HCT116 (cell line): ENCODE measurements at regions of chr1 and their contacts with region 1.

Region 1: GRCh38 chr1:174074757-174075156 is 52.6 kb upstream of the RC3H1 start:
- DNase-seq: no peak
- ATAC-seq: peak; percentile 66; the same call in 1 of the 2 replicates
- H3K4me3 ChIP-seq: no peak overlapping the region
- H3K27ac ChIP-seq: no peak overlapping the region
- H3K4me1 ChIP-seq: peaks cover 0 to 7% of the 10 kb centered on the region in 2 experiments; a peak in 2 of 4 replicates
- H3K27me3 ChIP-seq: no peaks in the 10 kb centered on the region
- CTCF ChIP-seq: peak; percentile 18 to 71 (median 57); a peak in 3 of 6 replicates
- POLR2A ChIP-seq: no peak
- RAD21 ChIP-seq: peak; percentile 81

Region 2: DNA sequence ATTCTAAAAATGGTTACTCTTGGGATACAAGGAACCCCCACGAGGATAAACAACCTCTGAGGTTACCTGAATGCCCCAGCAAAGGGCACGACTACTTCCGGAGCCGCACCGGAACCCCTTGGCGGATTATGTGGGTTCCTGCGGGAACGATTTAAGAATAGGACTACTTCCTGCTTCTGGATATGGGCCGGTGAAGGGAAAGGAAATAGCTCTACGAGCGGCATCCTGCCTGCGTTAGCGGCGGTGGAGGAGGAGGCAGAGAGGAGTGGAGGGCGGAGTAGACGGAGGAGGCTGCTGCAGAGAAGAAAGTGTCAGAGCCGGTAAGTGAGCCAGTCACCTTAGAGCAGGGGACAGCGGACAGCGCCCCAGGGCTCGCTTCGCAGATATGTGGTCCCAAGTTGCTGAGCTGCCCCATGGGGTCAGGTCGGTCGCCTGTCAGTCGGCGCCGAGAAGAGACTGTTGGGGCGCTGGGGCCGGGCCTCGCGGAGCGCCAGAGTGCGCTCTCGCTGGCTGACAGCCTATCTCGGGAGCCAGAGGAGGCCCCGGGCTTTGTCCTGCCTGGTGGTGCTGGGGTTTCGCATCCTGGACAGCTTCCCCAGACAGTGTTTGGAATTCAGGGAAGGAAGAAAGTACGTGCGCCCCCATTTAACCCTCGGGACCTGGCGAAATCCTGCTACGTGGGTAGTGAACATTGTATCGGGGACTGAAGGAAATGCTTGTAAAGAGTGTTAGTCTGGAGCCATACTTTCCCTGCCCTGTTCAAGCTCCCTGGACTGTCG is 359.8 kb before region 1 on chr1 and contains the start of gene KLHL20:
- CTCF ChIA-PET with region 1: no interaction called
- POLR2A ChIA-PET with region 1: no interaction called
- RAD21 ChIA-PET with region 1: no interaction called
- intact Hi-C with region 1: loop called (anchors 10 kb)
- DNase-seq: peak; percentile 89
- ATAC-seq: peak; percentile 97
- H3K4me3 ChIP-seq: peak within 1 kb of the TSS; percentile 89 to 92
- H3K27ac ChIP-seq: peak within 1 kb of the TSS; percentile 58
- H3K4me1 ChIP-seq: peaks cover 3 to 8% of the 10 kb centered on the region in 2 experiments; a peak in 3 of 4 replicates
- H3K27me3 ChIP-seq: no peaks in the 10 kb centered on the region
- CTCF ChIP-seq: no peak
- POLR2A ChIP-seq: peak; percentile 76
- RAD21 ChIP-seq: peak; percentile 15
- total RNA-seq, gene KLHL20: 16.2 TPM

Region 3: GRCh38 chr1:173867753-173868265 is 206.9 kb before region 1 on chr1 and contains the start of gene GAS5:
- CTCF ChIA-PET with region 1: no interaction called
- POLR2A ChIA-PET with region 1: no interaction called
- RAD21 ChIA-PET with region 1: interaction called in 1 of 2 experiments, 3 read pairs
- intact Hi-C with region 1: loop called (anchors 2 kb)
- DNase-seq: peak; percentile 99
- ATAC-seq: peak; percentile 85
- H3K4me3 ChIP-seq: peak within 1 kb of the TSS; percentile 69 to 94
- H3K27ac ChIP-seq: peak within 1 kb of the TSS; percentile 91
- H3K4me1 ChIP-seq: peaks cover 11 to 40% of the 10 kb centered on the region in 2 experiments; a peak in 3 of 4 replicates
- H3K27me3 ChIP-seq: no peaks in the 10 kb centered on the region
- CTCF ChIP-seq: no peak
- POLR2A ChIP-seq: peak; percentile 100
- RAD21 ChIP-seq: no peak
- total RNA-seq, gene GAS5: 798 TPM

Region 4: GRCh38 chr1:173954179-173954578 is 120.6 kb before region 1 on chr1:
- CTCF ChIA-PET with region 1: no interaction called
- POLR2A ChIA-PET with region 1: no interaction called
- RAD21 ChIA-PET with region 1: no interaction called
- intact Hi-C with region 1: loop called (anchors 10 kb)
- DNase-seq: no peak
- ATAC-seq: no peak
- H3K4me3 ChIP-seq: no peak overlapping the region
- H3K27ac ChIP-seq: no peak overlapping the region
- H3K4me1 ChIP-seq: no peaks in the 10 kb centered on the region
- H3K27me3 ChIP-seq: no peaks in the 10 kb centered on the region
- CTCF ChIP-seq: no peak
- POLR2A ChIP-seq: no peak
- RAD21 ChIP-seq: no peak

Region 5: GRCh38 chr1:173986951-173987350 is 87.8 kb before region 1 on chr1:
- CTCF ChIA-PET with region 1: no interaction called
- POLR2A ChIA-PET with region 1: no interaction called
- RAD21 ChIA-PET with region 1: no interaction called
- intact Hi-C with region 1: no loop called
- DNase-seq: no peak
- ATAC-seq: no peak
- H3K4me3 ChIP-seq: no peak overlapping the region
- H3K27ac ChIP-seq: no peak overlapping the region
- H3K4me1 ChIP-seq: no peaks in the 10 kb centered on the region
- H3K27me3 ChIP-seq: no peaks in the 10 kb centered on the region
- CTCF ChIP-seq: no peak
- POLR2A ChIP-seq: no peak
- RAD21 ChIP-seq: no peak